Motor neuron (in vitro differentiated cells): ENCODE measurements at regions of chr5 and their contacts with region 1.

Region 1: DNA sequence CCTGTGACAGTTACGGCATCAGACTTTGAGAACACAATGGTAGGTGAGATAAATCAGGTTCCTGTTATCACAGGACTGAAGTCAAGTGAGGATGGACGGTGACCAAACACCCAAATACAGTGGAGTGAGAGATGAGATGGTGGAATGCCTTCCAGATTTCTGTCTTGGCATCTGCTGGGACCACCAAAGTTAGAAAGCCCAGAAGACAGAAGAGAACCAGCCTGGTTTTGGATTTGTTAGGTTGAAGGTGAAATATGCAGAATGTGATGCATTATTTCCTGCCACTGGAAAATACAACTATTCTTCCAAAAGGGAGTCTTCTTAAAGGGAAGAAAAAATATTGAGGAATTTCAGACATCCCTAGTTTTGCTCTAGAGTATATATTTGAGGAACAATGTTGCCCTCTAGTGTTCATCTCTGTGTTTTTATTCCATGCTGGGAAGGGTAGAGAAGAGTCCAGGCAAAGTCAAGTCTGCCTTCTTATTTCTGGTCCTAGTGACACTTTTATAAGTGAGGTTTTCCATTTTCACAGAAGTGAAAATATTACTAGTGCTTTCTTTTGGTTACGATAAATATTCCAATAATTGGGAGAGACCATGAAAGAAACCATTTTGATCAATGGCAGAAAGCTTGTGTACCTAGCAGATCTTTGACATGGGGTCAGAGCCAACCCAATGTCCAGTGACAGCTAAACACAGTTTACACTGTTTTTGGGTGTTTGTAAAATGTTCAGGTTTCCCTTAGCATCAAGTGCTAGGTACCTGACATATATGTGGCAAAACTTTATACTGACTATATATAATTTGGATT is 142.3 kb upstream of the ANKH start:
- ATAC-seq: peak; percentile 49 to 97 (median 80)
- H3K4me3 ChIP-seq: no peak overlapping the region
- H3K27ac ChIP-seq: no peak overlapping the region
- H3K4me1 ChIP-seq: peaks cover 0 to 2% of the 10 kb centered on the region in 2 donors

Region 2: DNA sequence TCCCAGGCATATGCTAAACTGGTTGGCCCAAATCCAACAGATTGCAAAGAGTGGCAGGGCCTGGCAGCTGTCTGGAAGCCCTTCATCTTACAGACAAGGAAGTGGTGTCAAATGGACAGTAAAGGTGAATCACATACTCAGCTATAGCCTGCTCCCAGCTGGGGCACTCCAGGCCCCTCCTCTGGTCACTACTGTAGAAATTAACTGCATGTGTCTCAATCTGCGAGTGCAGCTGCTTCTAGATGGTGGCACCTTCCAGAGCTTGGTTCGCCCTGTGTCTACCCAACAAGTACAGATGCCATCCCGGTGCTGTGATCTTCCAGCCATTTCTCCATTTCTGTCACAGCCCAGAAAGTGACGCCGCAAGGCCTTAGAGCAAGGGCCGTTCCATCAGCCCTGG is 299.2 kb before region 1 on chr5:
- in situ Hi-C with region 1: loop called in 1 of 9 experiments (anchors 10 kb)
- ATAC-seq: peak in 3 of 8 experiments; percentile 22 to 60 (median 41)
- H3K4me3 ChIP-seq: no peak overlapping the region
- H3K27ac ChIP-seq: no peak overlapping the region
- H3K4me1 ChIP-seq: no peaks in the 10 kb centered on the region

Region 3: DNA sequence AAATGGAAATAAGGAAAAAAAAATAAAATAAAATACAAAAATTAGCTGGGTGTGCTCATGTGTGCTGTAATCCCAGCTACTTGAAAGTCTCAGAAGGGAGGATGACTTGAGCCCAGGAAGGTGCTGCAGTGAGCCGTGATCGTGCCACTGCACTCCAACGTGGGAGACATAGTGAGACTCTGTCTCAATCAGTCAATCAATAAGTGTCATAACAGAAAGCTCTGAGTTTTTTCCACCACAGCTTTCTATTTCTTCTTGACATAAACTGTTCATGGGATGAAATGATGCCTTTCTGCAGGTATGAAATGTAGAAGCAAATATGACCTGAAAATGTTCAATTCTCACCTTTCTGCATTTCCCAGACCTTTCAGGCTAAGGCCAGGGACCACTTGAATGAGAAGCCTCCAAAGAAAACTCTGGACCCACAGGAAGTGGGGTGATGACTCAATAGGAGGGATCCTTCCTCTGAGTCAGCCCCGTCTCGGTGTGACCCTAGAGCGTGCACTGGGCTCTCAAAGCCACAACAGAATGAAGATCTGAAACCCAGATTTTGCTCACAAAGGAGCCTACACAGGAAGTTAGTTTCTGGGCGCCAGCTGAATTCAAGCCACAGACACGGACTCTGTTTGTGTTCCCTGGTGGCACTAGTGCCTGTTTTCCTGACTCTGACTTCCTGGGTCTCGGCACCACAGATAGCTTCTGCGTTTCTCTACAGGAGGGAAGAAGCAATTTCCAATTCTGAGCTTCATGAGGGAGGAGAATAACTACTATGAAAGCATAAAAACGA is 204.3 kb before region 1 on chr5:
- in situ Hi-C with region 1: no loop called
- ATAC-seq: peak in 2 of 8 experiments; percentile 84 to 96
- H3K4me3 ChIP-seq: no peak overlapping the region
- H3K27ac ChIP-seq: no peak overlapping the region
- H3K4me1 ChIP-seq: peaks cover 20 to 36% of the 10 kb centered on the region in 2 donors